Heart left ventricle (tissue), 16 donors: ENCODE measurements at regions of chr20 and their contacts with region 1.

Region 1: GRCh38 chr20:5714261-5715041 is 35.8 kb upstream of the SHLD1 start:
- DNase-seq: peak in 3 of 5 donors; percentile 27 to 54 (median 29)
- ATAC-seq: peak; percentile 62 to 90 (median 74)
- H3K4me3 ChIP-seq: no peak overlapping the region
- H3K27ac ChIP-seq: peak overlapping the region in 10 of 12 donors; percentile 12 to 55 (median 38)
- H3K4me1 ChIP-seq: peaks cover 0 to 34% (median 12%) of the 10 kb centered on the region in 12 donors
- H3K27me3 ChIP-seq: no peaks in the 10 kb centered on the region
- CTCF ChIP-seq: no peak
- POLR2A ChIP-seq: no peak

Region 2: GRCh38 chr20:5658912-5659345 is 55.5 kb before region 1 on chr20:
- intact Hi-C with region 1: loop called in 1 of 10 experiments (anchors 10 kb)
- DNase-seq: peak in 4 of 5 donors; percentile 51 to 79 (median 62)
- ATAC-seq: peak; percentile 22 to 73 (median 64)
- H3K4me3 ChIP-seq: peak overlapping the region in 1 of 12 donors; percentile 10
- H3K27ac ChIP-seq: peak overlapping the region in 9 of 12 donors; percentile 29 to 86 (median 71)
- H3K4me1 ChIP-seq: peaks cover 2 to 71% (median 31%) of the 10 kb centered on the region in 12 donors
- H3K27me3 ChIP-seq: no peaks in the 10 kb centered on the region
- CTCF ChIP-seq: no peak
- POLR2A ChIP-seq: no peak

Region 3: GRCh38 chr20:5895626-5896025 is 181.2 kb after region 1 on chr20:
- intact Hi-C with region 1: no loop called
- DNase-seq: no peak
- ATAC-seq: no peak
- H3K4me3 ChIP-seq: no peak overlapping the region
- H3K27ac ChIP-seq: no peak overlapping the region
- H3K4me1 ChIP-seq: peaks cover 0 to 6% (median 0%) of the 10 kb centered on the region in 12 donors
- H3K27me3 ChIP-seq: peaks cover 0 to 6% (median 0%) of the 10 kb centered on the region in 9 donors
- CTCF ChIP-seq: no peak
- POLR2A ChIP-seq: no peak